Aorta (tissue), 5 donors: ENCODE measurements at regions of chr17 and their contacts with region 1.

Region 1: DNA sequence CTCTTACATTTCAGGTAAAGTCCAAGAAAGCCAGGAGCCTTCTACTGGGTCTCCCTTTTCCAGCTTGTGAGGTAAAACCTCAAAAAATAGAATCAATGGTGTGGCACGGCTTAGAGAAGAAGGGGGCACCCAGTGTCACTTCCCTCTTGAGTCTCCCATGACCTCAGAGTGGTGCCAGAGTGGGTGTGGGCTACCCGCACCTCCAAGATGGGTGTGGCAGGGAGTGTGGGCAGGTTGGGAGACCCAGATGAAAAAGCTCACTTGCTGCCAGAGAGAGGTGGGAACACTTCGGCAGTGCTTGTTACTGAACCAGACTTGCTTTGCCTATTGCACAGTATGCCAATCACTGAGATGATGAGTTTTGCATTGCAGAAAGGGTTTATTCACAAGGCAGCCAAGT is 326.3 kb downstream of the HS3ST3B1 start:
- DNase-seq: no peak
- ATAC-seq: no peak
- H3K4me3 ChIP-seq: no peak overlapping the region
- H3K27ac ChIP-seq: no peak overlapping the region
- H3K4me1 ChIP-seq: no peaks in the 10 kb centered on the region
- H3K27me3 ChIP-seq: no peaks in the 10 kb centered on the region

Region 2: DNA sequence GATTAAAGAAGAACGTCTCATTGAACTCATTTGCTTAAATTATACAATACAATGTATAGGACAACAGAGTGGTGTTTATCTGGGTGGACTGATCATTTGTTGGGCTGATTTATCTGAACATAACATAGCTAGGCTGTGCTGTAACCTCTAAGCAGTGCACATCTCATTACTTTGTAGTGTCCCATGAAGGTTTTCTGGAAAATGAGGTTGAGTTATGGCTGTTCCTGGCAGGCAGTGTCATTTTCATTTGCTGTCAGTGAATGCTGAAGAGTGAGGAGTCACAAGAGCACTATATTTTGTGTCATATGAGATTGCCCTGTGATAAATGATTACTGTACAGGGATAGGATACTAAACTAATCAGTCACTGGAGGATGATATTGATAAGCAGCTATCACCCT is 13.9 kb after region 1 on chr17:
- intact Hi-C with region 1: loop called in 1 of 2 experiments (anchors 2 kb)
- DNase-seq: no peak
- ATAC-seq: no peak
- H3K4me3 ChIP-seq: no peak overlapping the region
- H3K27ac ChIP-seq: no peak overlapping the region
- H3K4me1 ChIP-seq: no peaks in the 10 kb centered on the region
- H3K27me3 ChIP-seq: no peaks in the 10 kb centered on the region